AG04449 (cell line): ENCODE measurements at regions of chr3 and their contacts with region 1.

Region 1: GRCh38 chr3:11846281-11847034 is at the start of gene TAMM41:
- DNase-seq: peak; percentile 24
- H3K4me3 ChIP-seq: peak within 1 kb of the TSS; percentile 99
- CTCF ChIP-seq: peak; percentile 92

Region 2: GRCh38 chr3:11835028-11835639 is 11.3 kb before region 1 on chr3:
- CTCF ChIA-PET with region 1: interaction called, 38 read pairs
- POLR2A ChIA-PET with region 1: no interaction called
- DNase-seq: no peak
- H3K4me3 ChIP-seq: no peak overlapping the region
- CTCF ChIP-seq: peak; percentile 11